PC-3 (cell line): ENCODE measurements at regions of chr14 and their contacts with region 1.

Region 1: GRCh38 chr14:55411426-55412389 is at the start of gene ATG14:
- DNase-seq: peak; percentile 94
- ATAC-seq: peak; percentile 93
- H3K4me3 ChIP-seq: peak within 1 kb of the TSS; percentile 80
- H3K27ac ChIP-seq: peak within 1 kb of the TSS; percentile 71
- H3K4me1 ChIP-seq: peaks cover 33% of the 10 kb centered on the region
- H3K27me3 ChIP-seq: no peaks in the 10 kb centered on the region
- CTCF ChIP-seq: no peak
- total RNA-seq, gene ATG14: 20.2 and 22.5 TPM in 2 replicates

Region 2: GRCh38 chr14:54299410-54300363 is 1112.0 kb before region 1 on chr14:
- CTCF ChIA-PET with region 1: no interaction called
- POLR2A ChIA-PET with region 1: no interaction called
- intact Hi-C with region 1: no loop called
- DNase-seq: no peak
- ATAC-seq: no peak
- H3K4me3 ChIP-seq: no peak overlapping the region
- H3K27ac ChIP-seq: no peak overlapping the region
- H3K4me1 ChIP-seq: 0 out of 2 replicates have a peak, but pooled peaks cover 9% of the 10 kb centered on the region
- H3K27me3 ChIP-seq: no peaks in the 10 kb centered on the region
- CTCF ChIP-seq: no peak

Region 3: GRCh38 chr14:55152052-55152753 is 259.5 kb before region 1 on chr14:
- CTCF ChIA-PET with region 1: no interaction called
- POLR2A ChIA-PET with region 1: no interaction called
- intact Hi-C with region 1: no loop called
- DNase-seq: peak; percentile 39
- ATAC-seq: peak; percentile 90
- H3K4me3 ChIP-seq: no peak overlapping the region
- H3K27ac ChIP-seq: no peak overlapping the region
- H3K4me1 ChIP-seq: no peaks in the 10 kb centered on the region
- H3K27me3 ChIP-seq: no peaks in the 10 kb centered on the region
- CTCF ChIP-seq: no peak

Region 4: GRCh38 chr14:55212634-55213033 is 199.1 kb before region 1 on chr14:
- CTCF ChIA-PET with region 1: no interaction called
- POLR2A ChIA-PET with region 1: no interaction called
- intact Hi-C with region 1: loop called (anchors 5 kb)
- DNase-seq: no peak
- ATAC-seq: peak; percentile 12; the same call in 1 of the 2 replicates
- H3K4me3 ChIP-seq: no peak overlapping the region
- H3K27ac ChIP-seq: no peak overlapping the region
- H3K4me1 ChIP-seq: no peaks in the 10 kb centered on the region
- H3K27me3 ChIP-seq: 0 out of 2 replicates have a peak, but pooled peaks cover under 1% of the 10 kb centered on the region
- CTCF ChIP-seq: no peak

Region 5: DNA sequence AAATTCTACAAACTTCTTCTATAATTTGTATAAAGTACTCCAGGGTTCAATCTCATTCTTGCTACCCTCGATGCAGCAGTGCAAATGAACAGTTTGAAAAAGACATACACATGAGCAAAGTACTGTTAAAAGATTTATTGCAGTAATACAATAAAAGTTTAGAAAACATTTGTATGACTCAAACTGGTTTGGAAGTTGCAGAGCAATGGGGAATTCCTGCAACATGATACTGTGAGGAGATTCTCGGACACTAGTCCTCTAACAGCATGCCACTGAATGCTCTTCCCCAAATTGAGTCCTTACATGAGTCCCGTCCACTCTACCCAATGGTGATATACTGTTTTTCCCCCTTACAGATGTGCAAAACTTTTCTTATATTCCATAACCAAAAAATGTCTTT is 45.4 kb before region 1 on chr14:
- CTCF ChIA-PET with region 1: no interaction called
- POLR2A ChIA-PET with region 1: no interaction called
- intact Hi-C with region 1: loop called (anchors 1 kb)
- DNase-seq: peak; percentile 96
- ATAC-seq: peak; percentile 97
- H3K4me3 ChIP-seq: peak overlapping the region; percentile 5; the same call in 1 of the 2 replicates
- H3K27ac ChIP-seq: peak overlapping the region; percentile 81
- H3K4me1 ChIP-seq: peaks cover 25% of the 10 kb centered on the region
- H3K27me3 ChIP-seq: no peaks in the 10 kb centered on the region
- CTCF ChIP-seq: no peak

Region 6: DNA sequence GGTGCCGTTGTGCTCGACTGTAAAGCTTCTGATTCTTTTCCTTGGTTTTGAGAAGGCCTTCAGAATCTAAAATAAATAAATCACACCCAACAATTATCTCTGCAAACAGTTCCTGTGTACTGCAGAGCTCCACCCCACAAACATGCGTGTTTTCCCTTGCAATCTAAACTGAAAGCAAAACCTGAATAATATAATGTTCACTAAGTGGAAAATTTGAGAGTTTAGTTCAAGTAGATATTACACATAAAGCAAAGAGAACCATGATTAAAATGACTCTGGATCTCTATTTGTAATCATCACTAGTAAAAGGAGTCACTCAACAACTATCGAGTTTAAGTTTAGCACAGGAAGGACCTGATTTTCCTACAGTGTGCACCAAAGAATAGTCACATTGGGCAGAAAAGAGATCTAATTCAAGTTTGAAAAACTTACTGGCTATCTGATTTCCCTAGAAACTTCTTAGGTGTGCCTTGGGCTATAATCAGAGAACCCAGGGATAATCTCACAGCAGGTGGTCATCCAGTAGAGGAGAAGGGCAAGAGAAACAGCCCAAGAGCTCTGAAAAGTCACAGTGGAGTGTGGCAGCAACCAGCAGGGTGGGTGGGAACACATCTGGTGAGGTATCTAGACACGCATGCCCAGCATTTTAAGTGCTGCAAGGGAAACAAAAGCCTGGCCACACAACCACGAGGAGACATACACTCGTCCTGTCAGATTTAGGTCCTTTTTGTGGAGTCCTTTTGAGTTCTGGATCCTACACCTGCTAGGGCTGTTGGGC is 25.5 kb before region 1 on chr14:
- CTCF ChIA-PET with region 1: no interaction called
- POLR2A ChIA-PET with region 1: no interaction called
- intact Hi-C with region 1: no loop called
- DNase-seq: no peak
- ATAC-seq: no peak
- H3K4me3 ChIP-seq: no peak overlapping the region; the same call in 1 of the 2 replicates
- H3K27ac ChIP-seq: peak overlapping the region; percentile 79
- H3K4me1 ChIP-seq: peaks cover 69% of the 10 kb centered on the region
- H3K27me3 ChIP-seq: no peaks in the 10 kb centered on the region
- CTCF ChIP-seq: no peak

Region 7: GRCh38 chr14:55398679-55399078 is 13.0 kb before region 1 on chr14:
- CTCF ChIA-PET with region 1: no interaction called
- POLR2A ChIA-PET with region 1: no interaction called
- intact Hi-C with region 1: loop called (anchors 1 kb)
- DNase-seq: peak; percentile 99
- ATAC-seq: peak; percentile 94
- H3K4me3 ChIP-seq: no peak overlapping the region
- H3K27ac ChIP-seq: peak overlapping the region; percentile 31
- H3K4me1 ChIP-seq: peaks cover 23% of the 10 kb centered on the region
- H3K27me3 ChIP-seq: no peaks in the 10 kb centered on the region
- CTCF ChIP-seq: no peak

Region 8: DNA sequence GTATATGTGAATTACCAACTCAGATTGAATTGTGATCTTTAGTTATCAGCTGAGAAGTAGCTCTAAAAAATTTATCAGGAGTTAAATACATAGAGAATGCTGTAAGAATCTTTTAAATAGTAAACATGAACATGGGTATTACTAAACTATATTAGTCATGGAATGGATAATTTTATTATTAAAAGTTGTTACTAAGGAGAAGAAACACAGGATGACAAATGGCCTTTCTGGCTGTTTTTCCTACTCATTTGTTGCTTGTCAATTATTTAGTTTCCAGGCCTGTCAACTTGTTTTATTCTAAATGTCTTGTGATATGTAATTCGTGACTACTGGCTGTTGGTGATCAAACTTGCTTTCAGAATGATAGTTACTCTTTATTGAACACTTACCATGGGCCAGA is 227.0 kb after region 1 on chr14:
- CTCF ChIA-PET with region 1: no interaction called
- POLR2A ChIA-PET with region 1: no interaction called
- intact Hi-C with region 1: no loop called
- DNase-seq: no peak
- ATAC-seq: peak; percentile 42; the same call in 1 of the 2 replicates
- H3K4me3 ChIP-seq: no peak overlapping the region
- H3K27ac ChIP-seq: no peak overlapping the region
- H3K4me1 ChIP-seq: no peaks in the 10 kb centered on the region
- H3K27me3 ChIP-seq: no peaks in the 10 kb centered on the region
- CTCF ChIP-seq: no peak